HepG2 (cell line): ENCODE measurements at regions of chr1 and their contacts with region 1.

Region 1: GRCh38 chr1:183915625-183916510 is 110.9 kb downstream of the RGL1 start:
- DNase-seq: peak; percentile 83
- ATAC-seq: peak; percentile 95
- H3K4me3 ChIP-seq: no peak overlapping the region
- H3K27ac ChIP-seq: no peak overlapping the region
- H3K4me1 ChIP-seq: peaks cover 4% of the 10 kb centered on the region; the same call in 1 of the 2 replicates
- H3K27me3 ChIP-seq: no peaks in the 10 kb centered on the region
- CTCF ChIP-seq: peak; percentile 91
- EP300 ChIP-seq: no peak
- POLR2A ChIP-seq: no peak
- RAD21 ChIP-seq: peak; percentile 86

Region 2: GRCh38 chr1:183635606-183636333 is 280.1 kb before region 1 on chr1 and contains the start of gene ARPC5:
- CTCF ChIA-PET with region 1: interaction called, 3 read pairs
- POLR2A ChIA-PET with region 1: no interaction called
- in situ Hi-C with region 1: no loop called
- intact Hi-C with region 1: loop called (anchors 5 kb)
- DNase-seq: peak; percentile 90
- ATAC-seq: peak; percentile 90
- H3K4me3 ChIP-seq: peak within 1 kb of the TSS; percentile 89 to 97 (median 91)
- H3K27ac ChIP-seq: peak within 1 kb of the TSS; percentile 84
- H3K4me1 ChIP-seq: peaks cover 73% of the 10 kb centered on the region
- H3K27me3 ChIP-seq: no peaks in the 10 kb centered on the region
- CTCF ChIP-seq: no peak
- EP300 ChIP-seq: no peak; a peak in 1 of 4 replicates
- POLR2A ChIP-seq: peak; percentile 83 to 84
- RAD21 ChIP-seq: no peak
- total RNA-seq, gene ARPC5: 106 and 148 TPM in 2 replicates

Region 3: GRCh38 chr1:183655562-183656075 is 260.2 kb before region 1 on chr1:
- CTCF ChIA-PET with region 1: interaction called, 36 read pairs
- POLR2A ChIA-PET with region 1: interaction called, 4 read pairs
- in situ Hi-C with region 1: loop called (anchors 5 kb)
- intact Hi-C with region 1: loop called (anchors 1 kb)
- DNase-seq: peak; percentile 67
- ATAC-seq: peak; percentile 84
- H3K4me3 ChIP-seq: no peak overlapping the region
- H3K27ac ChIP-seq: no peak overlapping the region
- H3K4me1 ChIP-seq: peaks cover 14% of the 10 kb centered on the region
- H3K27me3 ChIP-seq: no peaks in the 10 kb centered on the region
- CTCF ChIP-seq: peak; percentile 87
- EP300 ChIP-seq: no peak
- POLR2A ChIP-seq: no peak
- RAD21 ChIP-seq: peak; percentile 87

Region 4: DNA sequence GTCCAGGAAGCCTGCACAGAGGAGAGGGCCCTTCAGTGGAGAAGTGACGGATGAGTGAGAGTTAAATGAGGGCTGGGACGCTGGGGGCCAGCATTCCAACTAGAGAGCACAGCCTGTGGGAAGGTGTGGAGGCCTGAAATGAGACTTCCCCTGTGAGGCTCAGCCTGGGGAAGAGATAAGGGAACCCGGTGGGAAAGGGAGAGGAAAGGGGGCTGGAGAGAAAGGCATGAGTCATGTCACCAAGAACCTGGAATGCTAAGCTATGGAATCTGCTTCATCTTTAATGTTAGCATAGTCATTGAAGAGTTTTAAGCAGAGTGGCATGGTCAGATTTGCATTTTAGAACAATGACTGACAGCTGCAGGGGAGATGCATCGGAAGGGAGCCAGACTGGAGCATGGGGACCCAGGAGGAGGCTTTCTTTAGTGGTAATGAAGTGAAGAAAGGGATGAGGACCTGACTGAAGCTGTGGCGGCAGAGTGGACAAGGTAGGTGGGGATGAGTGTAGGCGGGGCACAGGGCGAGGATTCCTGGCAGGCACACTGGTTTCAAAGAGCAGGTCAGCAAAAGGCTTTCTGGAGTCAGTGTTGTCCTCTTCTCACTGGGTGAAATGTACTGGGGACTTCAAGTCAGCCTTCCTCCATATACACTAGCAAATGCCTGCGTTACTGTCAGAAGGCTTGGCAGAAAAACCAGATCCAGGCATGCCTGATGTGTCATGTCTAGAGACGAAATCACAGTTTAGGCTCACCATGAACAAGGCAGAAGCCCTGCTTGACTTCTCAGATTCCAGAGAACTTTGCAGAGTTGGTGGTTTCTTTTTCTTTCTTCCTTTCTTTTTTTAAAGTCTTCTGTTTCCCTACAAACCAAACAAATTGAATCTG is 102.9 kb before region 1 on chr1:
- CTCF ChIA-PET with region 1: no interaction called
- POLR2A ChIA-PET with region 1: no interaction called
- in situ Hi-C with region 1: no loop called
- intact Hi-C with region 1: loop called (anchors 5 kb)
- DNase-seq: peak; percentile 82
- ATAC-seq: peak; percentile 90
- H3K4me3 ChIP-seq: peak overlapping the region in 2 of 3 experiments; percentile 27 to 48; a peak in 4 of 6 replicates
- H3K27ac ChIP-seq: no peak overlapping the region
- H3K4me1 ChIP-seq: peaks cover 18% of the 10 kb centered on the region
- H3K27me3 ChIP-seq: no peaks in the 10 kb centered on the region
- CTCF ChIP-seq: no peak
- EP300 ChIP-seq: no peak
- POLR2A ChIP-seq: no peak
- RAD21 ChIP-seq: no peak

Region 5: DNA sequence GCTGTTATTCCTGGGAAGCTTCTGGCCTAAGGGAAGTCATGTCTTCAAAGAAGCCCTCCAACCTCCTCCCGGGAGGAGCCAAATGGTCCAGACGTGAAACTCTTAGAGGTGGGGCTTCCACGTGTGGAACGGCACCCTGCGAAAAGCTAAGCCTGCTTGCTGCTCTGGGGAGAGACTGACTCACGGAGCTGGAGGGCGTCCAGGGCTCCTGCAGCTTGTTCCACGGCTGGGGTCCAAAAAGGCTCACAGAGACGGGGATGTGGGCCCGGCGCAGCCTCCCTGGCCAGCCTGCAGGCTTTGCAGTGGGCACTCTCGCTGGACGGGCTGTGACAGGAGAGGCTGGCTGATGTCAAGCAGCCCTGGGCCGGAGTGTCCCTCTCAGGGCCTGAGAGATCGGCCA is 16.5 kb after region 1 on chr1:
- CTCF ChIA-PET with region 1: no interaction called
- POLR2A ChIA-PET with region 1: no interaction called
- in situ Hi-C with region 1: no loop called
- intact Hi-C with region 1: no loop called
- DNase-seq: no peak
- ATAC-seq: peak; percentile 60
- H3K4me3 ChIP-seq: no peak overlapping the region
- H3K27ac ChIP-seq: no peak overlapping the region
- H3K4me1 ChIP-seq: no peaks in the 10 kb centered on the region; the same call in 1 of the 2 replicates
- H3K27me3 ChIP-seq: no peaks in the 10 kb centered on the region
- CTCF ChIP-seq: no peak
- EP300 ChIP-seq: no peak
- POLR2A ChIP-seq: no peak
- RAD21 ChIP-seq: no peak

Region 6: GRCh38 chr1:184025242-184025675 is 109.4 kb after region 1 on chr1:
- CTCF ChIA-PET with region 1: no interaction called
- POLR2A ChIA-PET with region 1: no interaction called
- in situ Hi-C with region 1: no loop called
- intact Hi-C with region 1: loop called (anchors 5 kb)
- DNase-seq: peak; percentile 80
- ATAC-seq: peak; percentile 92
- H3K4me3 ChIP-seq: no peak overlapping the region
- H3K27ac ChIP-seq: no peak overlapping the region
- H3K4me1 ChIP-seq: peaks cover 22% of the 10 kb centered on the region
- H3K27me3 ChIP-seq: no peaks in the 10 kb centered on the region; a peak in 2 of 5 replicates
- CTCF ChIP-seq: no peak
- EP300 ChIP-seq: no peak
- POLR2A ChIP-seq: no peak
- RAD21 ChIP-seq: no peak